ENCODE measurements at regions of chr5 and their contacts with region 1.

Region 1: DNA sequence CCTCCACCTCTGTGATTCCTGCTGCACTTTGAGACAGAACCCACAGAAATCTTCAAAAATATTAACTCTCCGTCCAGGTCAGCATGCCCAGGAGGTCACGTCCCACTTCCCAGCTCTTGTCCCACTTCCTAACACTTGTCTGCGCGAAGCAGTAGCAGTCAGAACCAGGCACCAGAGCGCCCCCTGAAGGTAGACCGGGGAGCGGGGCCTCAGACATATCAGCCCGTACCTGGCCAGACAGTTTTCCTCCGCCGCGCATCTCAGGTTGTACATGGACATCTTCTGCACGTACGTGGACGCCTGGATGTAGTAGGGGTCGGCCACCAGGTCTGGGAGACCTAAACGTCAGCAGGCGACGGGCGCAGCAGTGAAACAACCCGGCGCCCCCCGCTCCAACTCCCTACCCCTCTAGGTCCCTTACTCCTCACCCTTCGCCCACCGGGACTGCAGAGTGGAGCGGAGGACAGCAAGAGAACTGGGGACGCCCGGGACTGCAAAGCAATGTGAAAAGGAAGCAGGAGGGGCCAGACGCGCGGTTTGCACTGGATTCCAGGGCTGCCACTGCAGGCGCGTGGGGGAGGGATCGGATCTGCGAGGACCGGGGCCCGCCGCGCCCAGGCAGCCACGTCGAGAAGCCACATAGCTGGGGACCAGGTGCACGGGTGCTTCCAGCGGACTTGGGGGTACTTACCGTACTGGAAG is 1.2 kb downstream of the LOX start:
- DNase-seq: peak; percentile 90
- H3K4me3 ChIP-seq: peak overlapping the region; percentile 45 to 70 (median 54)
- H3K27ac ChIP-seq: peak overlapping the region; percentile 63 to 83 (median 73)
- H3K4me1 ChIP-seq: peaks cover 0 to 25% (median 16%) of the 10 kb centered on the region in 4 donors
- H3K27me3 ChIP-seq: peaks cover 0 to 3% (median 0%) of the 10 kb centered on the region in 3 donors
- CTCF ChIP-seq: peak; percentile 36 to 60 (median 40)
- EP300 ChIP-seq: no peak
- POLR2A ChIP-seq: no peak

Region 2: GRCh38 chr5:121559832-121560231 is 517.0 kb before region 1 on chr5:
- intact Hi-C with region 1: no loop called
- DNase-seq: no peak
- H3K4me3 ChIP-seq: no peak overlapping the region
- H3K27ac ChIP-seq: no peak overlapping the region
- H3K4me1 ChIP-seq: no peaks in the 10 kb centered on the region
- H3K27me3 ChIP-seq: no peaks in the 10 kb centered on the region
- CTCF ChIP-seq: no peak
- EP300 ChIP-seq: no peak
- POLR2A ChIP-seq: no peak

Region 3: GRCh38 chr5:121962347-121962670 is 114.5 kb before region 1 on chr5:
- intact Hi-C with region 1: loop called (anchors 5 kb)
- DNase-seq: no peak
- H3K4me3 ChIP-seq: peak overlapping the region; percentile 68 to 94 (median 82)
- H3K27ac ChIP-seq: peak overlapping the region; percentile 72 to 77 (median 75)
- H3K4me1 ChIP-seq: peaks cover 0 to 18% (median 15%) of the 10 kb centered on the region in 4 donors
- H3K27me3 ChIP-seq: no peaks in the 10 kb centered on the region
- CTCF ChIP-seq: no peak
- EP300 ChIP-seq: no peak
- POLR2A ChIP-seq: no peak